Activated naive CD4-positive, alpha-beta T cell treated with anti-CD3 and anti-CD28 coated beads for 36 hours (primary cell): ENCODE measurements at regions of chr13 and their contacts with region 1.

Region 1: DNA sequence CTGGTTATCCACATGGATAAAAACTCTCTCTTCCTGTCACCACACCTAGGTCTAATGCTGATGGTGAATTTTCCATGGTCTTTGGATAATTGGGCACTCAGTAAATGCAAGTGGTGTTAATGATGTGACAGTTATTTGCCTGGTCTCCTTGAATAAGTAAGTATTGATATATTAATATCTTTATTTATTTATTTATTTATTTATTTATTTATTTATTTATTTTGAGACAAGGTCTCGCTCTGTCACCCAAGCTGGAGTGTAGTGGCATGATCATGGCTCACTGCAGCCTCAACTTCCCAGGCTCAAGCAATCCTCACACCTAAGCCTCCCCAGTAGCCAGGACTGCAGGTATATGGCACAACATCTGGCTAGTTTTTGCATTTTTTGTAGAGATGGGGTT is 46.3 kb upstream of the ITM2B start:
- DNase-seq: no peak
- H3K4me3 Mint-ChIP-seq: no peak overlapping the region
- H3K27ac Mint-ChIP-seq: no peak overlapping the region
- H3K4me1 Mint-ChIP-seq: peaks cover 58% of the 10 kb centered on the region
- H3K27me3 Mint-ChIP-seq: no peaks in the 10 kb centered on the region

Region 2: DNA sequence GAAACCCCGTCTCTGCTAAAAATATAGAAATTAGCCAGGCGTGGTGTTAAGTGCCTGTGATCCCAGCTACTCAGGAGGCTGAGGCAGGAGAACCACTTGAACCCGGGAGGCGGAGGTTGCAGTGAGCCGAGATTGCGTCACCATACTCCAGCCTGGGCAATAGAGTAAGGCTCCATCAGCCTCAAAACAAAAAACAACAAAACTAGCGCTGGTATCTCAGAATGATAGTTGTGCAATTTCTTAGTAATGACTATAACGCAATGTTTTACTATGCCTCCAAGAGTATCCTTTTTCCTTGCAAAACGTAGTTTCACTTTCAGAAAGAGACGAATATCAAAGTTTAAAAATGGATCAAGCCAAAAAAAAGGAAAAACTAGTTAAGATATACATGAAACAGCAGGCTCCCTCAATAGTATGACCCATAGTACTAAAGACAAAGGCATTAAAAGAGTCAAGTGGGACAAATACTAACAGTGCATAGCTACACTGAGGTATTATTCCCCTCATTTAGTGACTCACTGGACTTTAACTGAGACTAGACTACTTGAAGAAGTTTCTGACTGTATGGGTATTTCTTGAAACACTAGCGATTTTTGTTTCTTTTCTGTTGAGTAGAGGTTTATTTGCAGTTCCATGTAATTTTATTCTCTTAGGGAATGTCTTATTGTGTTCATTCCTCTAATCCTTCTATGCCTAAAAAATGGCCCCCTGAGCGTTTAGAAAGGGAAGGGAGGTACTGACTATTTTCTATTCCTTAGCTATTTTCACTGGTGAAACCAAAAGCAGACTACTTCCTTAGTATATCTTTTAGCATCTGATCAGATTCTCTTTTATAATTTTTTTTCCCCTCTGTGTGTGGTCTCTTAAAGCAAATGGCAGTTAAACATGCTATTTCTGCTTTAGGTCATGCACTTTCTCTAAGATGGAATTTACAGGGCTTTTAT is 35.9 kb after region 1 on chr13:
- CTCF ChIA-PET with region 1: interaction called, 3 read pairs
- intact Hi-C with region 1: loop called (anchors 1 kb)
- DNase-seq: no peak
- H3K4me3 Mint-ChIP-seq: no peak overlapping the region
- H3K27ac Mint-ChIP-seq: peak overlapping the region; percentile 5
- H3K4me1 Mint-ChIP-seq: peaks cover 55% of the 10 kb centered on the region
- H3K27me3 Mint-ChIP-seq: no peaks in the 10 kb centered on the region